ENCODE measurements at regions of chr5 and their contacts with region 1.

Region 1: GRCh38 chr5:43270675-43271074 is 42.5 kb downstream of the HMGCS1 start:
- DNase-seq: no peak
- H3K4me3 ChIP-seq: no peak overlapping the region
- H3K27ac ChIP-seq: no peak overlapping the region
- H3K4me1 ChIP-seq: no peaks in the 10 kb centered on the region
- H3K27me3 ChIP-seq: no peaks in the 10 kb centered on the region
- CTCF ChIP-seq: no peak
- EP300 ChIP-seq: no peak
- POLR2A ChIP-seq: no peak

Region 2: DNA sequence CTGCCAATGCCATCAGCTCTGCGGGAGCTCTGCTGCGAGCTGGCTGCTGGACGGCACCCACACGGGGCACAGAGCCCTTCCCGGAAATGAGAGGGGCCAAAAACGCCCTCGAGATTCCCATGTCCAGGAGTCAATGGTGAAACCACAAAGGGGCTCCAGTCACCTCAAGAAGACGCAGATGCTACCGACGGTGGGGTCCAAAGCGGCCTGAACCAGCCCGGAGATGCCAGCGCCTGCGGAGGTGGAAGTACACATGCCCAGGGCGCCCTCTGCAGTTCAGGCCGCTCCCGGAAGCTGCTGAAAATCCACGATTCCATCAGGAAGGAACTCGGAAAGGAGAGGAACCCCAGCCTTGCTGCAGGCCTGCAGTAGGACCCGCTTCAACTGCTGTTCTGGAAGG is 376.6 kb before region 1 on chr5:
- in situ Hi-C with region 1: no loop called
- intact Hi-C with region 1: no loop called
- DNase-seq: no peak
- H3K4me3 ChIP-seq: no peak overlapping the region
- H3K27ac ChIP-seq: no peak overlapping the region
- H3K4me1 ChIP-seq: no peaks in the 10 kb centered on the region
- H3K27me3 ChIP-seq: no peaks in the 10 kb centered on the region
- CTCF ChIP-seq: no peak
- EP300 ChIP-seq: no peak
- POLR2A ChIP-seq: no peak

Region 3: DNA sequence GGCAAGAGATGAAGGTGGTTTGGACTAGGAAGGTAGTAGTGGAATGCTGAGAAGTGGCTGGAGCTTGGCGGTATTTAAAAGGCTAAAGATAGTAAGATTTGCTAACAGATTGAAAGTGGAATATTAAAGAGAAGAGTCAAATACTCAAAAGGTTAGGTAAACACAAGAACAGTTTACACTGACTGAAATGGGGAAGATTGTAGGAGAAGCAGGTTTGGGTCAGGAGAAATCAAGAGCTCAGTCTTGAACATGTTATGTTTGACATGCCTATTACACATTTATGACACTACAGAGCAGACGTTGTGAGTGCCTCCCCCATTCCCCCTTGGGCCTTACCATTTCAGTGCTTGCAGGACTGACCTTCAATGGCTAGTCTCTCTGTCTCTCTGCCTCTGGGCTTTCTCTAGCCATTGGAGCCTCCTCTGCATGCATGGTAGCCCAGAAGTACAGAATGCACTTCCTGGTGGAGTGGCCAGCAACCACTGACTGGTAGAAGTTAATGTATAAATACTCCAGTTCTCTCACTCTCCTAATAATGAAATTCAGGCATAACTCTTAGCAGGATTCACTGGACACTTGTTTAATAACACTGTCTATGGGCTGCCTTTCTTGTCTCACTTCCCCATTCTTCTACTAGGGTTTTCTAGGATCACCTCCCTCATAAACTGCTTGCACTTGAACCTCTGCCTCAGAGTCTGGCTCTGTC is 14.3 kb before region 1 on chr5:
- in situ Hi-C with region 1: no loop called
- intact Hi-C with region 1: loop called (anchors 1 kb)
- DNase-seq: no peak
- H3K4me3 ChIP-seq: no peak overlapping the region
- H3K27ac ChIP-seq: no peak overlapping the region
- H3K4me1 ChIP-seq: no peaks in the 10 kb centered on the region
- H3K27me3 ChIP-seq: no peaks in the 10 kb centered on the region
- CTCF ChIP-seq: no peak
- EP300 ChIP-seq: no peak
- POLR2A ChIP-seq: no peak

Region 4: GRCh38 chr5:43432473-43433365 is 162.0 kb after region 1 on chr5:
- in situ Hi-C with region 1: no loop called
- intact Hi-C with region 1: no loop called
- DNase-seq: peak; percentile 85
- H3K4me3 ChIP-seq: no peak overlapping the region
- H3K27ac ChIP-seq: peak overlapping the region; percentile 36 to 62 (median 58)
- H3K4me1 ChIP-seq: peaks cover 4 to 20% (median 10%) of the 10 kb centered on the region in 4 donors
- H3K27me3 ChIP-seq: no peaks in the 10 kb centered on the region
- CTCF ChIP-seq: no peak
- EP300 ChIP-seq: no peak
- POLR2A ChIP-seq: no peak

Measured in transverse colon (tissue), 4 donors.